Activated B cell treated with CpG ODN at 0.5 μM for 24 hours (primary cell): ENCODE measurements at regions of chr16 and their contacts with region 1.

Region 1: DNA sequence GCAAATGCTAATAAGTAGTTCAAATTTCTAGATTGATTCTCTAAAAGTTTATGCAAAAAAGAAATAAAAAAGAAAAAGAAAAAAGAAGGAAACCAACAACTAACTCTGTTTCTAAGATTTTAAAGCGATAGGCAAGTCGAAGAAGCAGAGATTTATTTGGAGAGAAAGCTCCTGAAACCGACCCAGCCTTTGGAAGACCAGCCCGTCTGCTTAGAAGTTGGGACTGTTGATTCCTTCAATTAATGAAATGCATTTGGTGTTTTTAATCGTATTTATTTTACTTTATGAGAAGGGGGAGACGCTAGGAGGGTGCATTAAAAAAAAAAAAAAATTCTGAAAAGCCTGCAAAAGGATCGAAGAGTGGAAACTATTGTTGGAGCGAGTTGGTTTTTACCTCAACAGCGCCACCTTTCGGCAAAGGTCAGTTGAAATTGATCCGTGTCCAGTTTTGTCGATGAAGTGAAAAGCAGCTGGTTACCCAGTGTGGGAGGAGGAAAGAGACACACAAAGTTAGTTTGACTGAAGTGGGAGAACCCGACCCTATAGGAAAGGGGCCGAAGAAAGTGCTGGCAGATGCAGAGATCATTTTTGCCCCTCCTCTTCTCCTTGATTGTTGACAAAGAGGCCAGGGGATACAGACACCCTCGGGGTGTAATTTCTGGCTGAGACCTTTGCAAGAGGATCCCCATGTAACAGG is 1.5 kb upstream of the MAF start:
- DNase-seq: peak; percentile 26
- ATAC-seq: no peak
- H3K4me3 Mint-ChIP-seq: peak overlapping the region; percentile 90
- H3K27ac Mint-ChIP-seq: no peak overlapping the region
- H3K4me1 Mint-ChIP-seq: peaks cover 41% of the 10 kb centered on the region
- H3K27me3 Mint-ChIP-seq: peaks cover 44% of the 10 kb centered on the region
- CTCF ChIP-seq: peak; percentile 42

Region 2: GRCh38 chr16:78227855-78228254 is 1374.2 kb before region 1 on chr16:
- CTCF ChIA-PET with region 1: no interaction called
- POLR2A ChIA-PET with region 1: no interaction called
- intact Hi-C with region 1: loop called (anchors 5 kb)
- DNase-seq: no peak
- ATAC-seq: no peak
- H3K4me3 Mint-ChIP-seq: no peak overlapping the region
- H3K27ac Mint-ChIP-seq: no peak overlapping the region
- H3K4me1 Mint-ChIP-seq: no peaks in the 10 kb centered on the region
- H3K27me3 Mint-ChIP-seq: no peaks in the 10 kb centered on the region
- CTCF ChIP-seq: no peak

Region 3: GRCh38 chr16:78770353-78771091 is 831.6 kb before region 1 on chr16:
- CTCF ChIA-PET with region 1: interaction called, 3 read pairs
- POLR2A ChIA-PET with region 1: no interaction called
- intact Hi-C with region 1: loop called (anchors 2 kb)
- DNase-seq: peak; percentile 70
- ATAC-seq: peak; percentile 79
- H3K4me3 Mint-ChIP-seq: no peak overlapping the region
- H3K27ac Mint-ChIP-seq: no peak overlapping the region
- H3K4me1 Mint-ChIP-seq: peaks cover 28% of the 10 kb centered on the region
- H3K27me3 Mint-ChIP-seq: no peaks in the 10 kb centered on the region
- CTCF ChIP-seq: peak; percentile 58

Region 4: DNA sequence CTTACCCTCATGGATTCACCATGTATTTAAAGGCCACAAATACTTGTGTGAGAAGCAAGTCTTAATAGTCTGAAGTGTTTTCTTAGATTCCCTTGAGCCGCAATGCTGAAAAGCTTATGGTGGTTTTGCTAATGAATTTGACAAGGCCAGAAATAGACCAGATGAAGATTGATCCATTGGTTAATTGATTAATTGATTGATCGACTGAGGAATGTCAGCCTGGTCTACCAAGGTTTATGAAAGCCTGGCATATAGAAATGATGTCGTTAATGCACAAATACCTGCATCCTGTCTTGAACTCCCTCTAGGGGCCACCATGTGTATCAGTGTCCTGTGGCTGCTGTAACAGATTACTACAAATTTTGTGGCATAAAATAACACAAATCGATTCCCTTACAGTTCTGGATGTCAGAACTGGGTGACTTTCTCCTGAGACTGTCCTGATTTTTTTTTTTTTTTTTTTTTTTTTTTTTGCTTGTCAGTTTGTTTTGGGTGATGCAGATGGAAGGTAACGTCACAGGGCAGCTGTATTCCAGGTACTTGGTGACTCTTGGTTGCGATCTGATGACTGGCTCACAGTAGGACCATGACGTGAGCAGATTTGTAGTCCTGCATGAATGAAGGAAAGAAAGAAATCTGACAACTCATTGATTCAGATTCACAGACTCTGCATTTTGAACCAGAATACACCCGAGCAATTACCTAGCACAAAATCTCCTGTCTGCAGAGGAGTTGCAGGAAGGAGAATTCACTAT is 554.7 kb before region 1 on chr16:
- CTCF ChIA-PET with region 1: no interaction called
- POLR2A ChIA-PET with region 1: no interaction called
- intact Hi-C with region 1: loop called (anchors 5 kb)
- DNase-seq: no peak
- ATAC-seq: peak; percentile 50
- H3K4me3 Mint-ChIP-seq: no peak overlapping the region
- H3K27ac Mint-ChIP-seq: no peak overlapping the region
- H3K4me1 Mint-ChIP-seq: no peaks in the 10 kb centered on the region
- H3K27me3 Mint-ChIP-seq: no peaks in the 10 kb centered on the region
- CTCF ChIP-seq: peak; percentile 47

Region 5: GRCh38 chr16:79286646-79287423 is 315.2 kb before region 1 on chr16:
- CTCF ChIA-PET with region 1: no interaction called
- POLR2A ChIA-PET with region 1: no interaction called
- intact Hi-C with region 1: loop called (anchors 5 kb)
- DNase-seq: peak; percentile 37
- ATAC-seq: peak; percentile 88
- H3K4me3 Mint-ChIP-seq: peak overlapping the region; percentile 29
- H3K27ac Mint-ChIP-seq: no peak overlapping the region
- H3K4me1 Mint-ChIP-seq: peaks cover 28% of the 10 kb centered on the region
- H3K27me3 Mint-ChIP-seq: peaks cover 53% of the 10 kb centered on the region
- CTCF ChIP-seq: no peak

Region 6: DNA sequence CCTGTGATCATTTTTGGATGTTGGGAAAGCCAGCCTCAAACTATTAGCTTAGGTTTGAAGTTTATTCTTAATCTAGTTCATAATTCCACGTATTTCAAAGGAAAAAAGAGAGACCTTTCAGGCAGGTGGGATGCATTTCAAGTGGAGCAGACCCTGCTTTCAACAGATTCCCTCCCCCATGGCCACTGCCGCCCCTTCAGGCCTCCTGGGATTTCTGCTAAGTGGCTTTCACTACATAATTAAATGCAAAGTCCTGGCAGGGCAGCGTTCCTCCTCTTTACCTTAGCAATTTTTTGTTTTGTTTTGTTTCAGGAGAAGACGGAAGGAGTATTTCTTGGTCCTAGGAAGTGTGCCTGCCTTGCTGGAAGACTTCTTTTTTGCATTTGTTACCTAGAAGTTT is 38.2 kb before region 1 on chr16:
- CTCF ChIA-PET with region 1: no interaction called
- POLR2A ChIA-PET with region 1: no interaction called
- intact Hi-C with region 1: no loop called
- DNase-seq: no peak
- ATAC-seq: no peak
- H3K4me3 Mint-ChIP-seq: no peak overlapping the region
- H3K27ac Mint-ChIP-seq: no peak overlapping the region
- H3K4me1 Mint-ChIP-seq: no peaks in the 10 kb centered on the region
- H3K27me3 Mint-ChIP-seq: peaks cover 5% of the 10 kb centered on the region
- CTCF ChIP-seq: no peak

Region 7: DNA sequence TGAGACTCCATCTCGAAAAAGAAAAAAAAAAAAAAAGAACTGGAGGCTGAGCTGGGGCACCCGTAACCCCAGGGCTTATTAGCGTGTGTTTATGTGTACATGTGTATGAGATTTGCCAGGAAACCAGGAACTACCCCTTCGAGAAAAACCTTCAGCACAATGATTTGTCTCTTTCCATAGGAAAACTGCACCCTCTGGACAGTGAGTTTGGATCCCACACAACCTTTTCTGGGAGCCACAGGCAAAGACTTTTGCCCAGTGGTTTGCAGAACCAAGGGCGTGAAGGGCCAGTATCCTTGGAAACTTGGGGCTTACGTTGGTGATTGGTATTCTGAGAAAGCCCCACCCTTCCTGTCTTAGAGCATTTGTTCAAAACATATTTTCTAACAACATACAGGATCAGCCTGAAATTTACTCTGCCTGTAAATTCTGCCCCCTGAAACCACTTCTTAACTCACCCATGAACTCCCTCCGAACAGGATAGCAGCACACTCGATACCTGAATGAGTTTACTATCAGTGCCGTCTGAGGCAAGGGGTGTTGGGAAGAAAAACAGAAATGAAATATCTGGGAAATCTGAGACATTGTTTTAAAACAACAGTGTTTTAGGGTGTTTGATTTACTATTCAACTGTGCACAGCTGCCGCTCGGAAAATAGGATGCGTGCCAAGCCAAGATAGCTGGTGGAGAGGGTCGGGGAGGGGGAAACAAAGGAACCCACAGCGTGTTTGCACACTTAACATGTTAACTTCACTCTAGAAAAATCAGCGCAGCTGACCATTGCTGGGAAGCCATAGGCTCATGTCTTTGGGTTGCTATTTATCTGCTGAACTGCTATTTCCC is 38.7 kb after region 1 on chr16:
- CTCF ChIA-PET with region 1: no interaction called
- POLR2A ChIA-PET with region 1: no interaction called
- intact Hi-C with region 1: no loop called
- DNase-seq: no peak
- ATAC-seq: no peak
- H3K4me3 Mint-ChIP-seq: no peak overlapping the region
- H3K27ac Mint-ChIP-seq: no peak overlapping the region
- H3K4me1 Mint-ChIP-seq: no peaks in the 10 kb centered on the region
- H3K27me3 Mint-ChIP-seq: peaks cover 5% of the 10 kb centered on the region
- CTCF ChIP-seq: no peak

Region 8: GRCh38 chr16:80526425-80527061 is 924.5 kb after region 1 on chr16:
- CTCF ChIA-PET with region 1: no interaction called
- POLR2A ChIA-PET with region 1: no interaction called
- intact Hi-C with region 1: loop called (anchors 5 kb)
- DNase-seq: peak; percentile 20
- ATAC-seq: peak; percentile 86
- H3K4me3 Mint-ChIP-seq: no peak overlapping the region
- H3K27ac Mint-ChIP-seq: no peak overlapping the region
- H3K4me1 Mint-ChIP-seq: no peaks in the 10 kb centered on the region
- H3K27me3 Mint-ChIP-seq: no peaks in the 10 kb centered on the region
- CTCF ChIP-seq: peak; percentile 90

Region 9: DNA sequence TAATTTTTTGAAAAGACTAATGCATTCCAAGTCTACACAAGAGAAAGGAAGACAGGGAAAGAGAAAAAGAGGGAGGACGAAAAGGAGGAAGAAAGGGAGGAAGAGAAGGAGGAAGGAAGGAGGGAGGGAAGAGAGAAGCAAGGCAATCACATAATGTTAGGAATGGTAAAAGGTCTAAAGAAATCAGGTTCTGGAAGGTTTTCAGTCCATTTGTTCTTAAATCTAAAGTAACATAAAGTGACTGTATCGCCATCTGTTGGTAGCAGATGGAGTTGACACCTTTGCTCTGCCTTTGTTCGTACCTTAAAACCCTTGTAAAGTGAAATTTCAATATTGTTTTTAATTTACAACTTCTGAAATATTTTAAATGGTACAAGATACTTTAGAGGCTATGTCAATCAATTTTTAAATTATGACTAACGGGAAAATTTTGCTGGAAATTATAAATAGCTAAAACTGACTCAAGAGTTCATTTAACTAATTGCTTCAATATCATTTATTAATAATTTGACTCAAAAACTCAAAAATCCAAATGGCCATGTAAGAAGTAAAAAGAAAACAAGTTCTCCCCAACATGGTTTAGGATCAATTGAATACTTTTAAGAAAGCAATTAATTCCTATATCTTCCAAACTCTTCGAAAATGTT is 1222.8 kb after region 1 on chr16:
- CTCF ChIA-PET with region 1: no interaction called
- POLR2A ChIA-PET with region 1: no interaction called
- intact Hi-C with region 1: loop called (anchors 10 kb)
- DNase-seq: no peak
- ATAC-seq: no peak
- H3K4me3 Mint-ChIP-seq: no peak overlapping the region
- H3K27ac Mint-ChIP-seq: no peak overlapping the region
- H3K4me1 Mint-ChIP-seq: peaks cover 5% of the 10 kb centered on the region
- H3K27me3 Mint-ChIP-seq: peaks cover 2% of the 10 kb centered on the region
- CTCF ChIP-seq: peak; percentile 41